ENCODE measurements at regions of chr2 and their contacts with region 1.

Region 1: GRCh38 chr2:171939743-171940071 is 17.4 kb downstream of the HAT1 start:
- DNase-seq: no peak
- H3K4me3 ChIP-seq: no peak overlapping the region
- H3K27ac ChIP-seq: no peak overlapping the region
- H3K4me1 ChIP-seq: no peaks in the 10 kb centered on the region
- H3K27me3 ChIP-seq: no peaks in the 10 kb centered on the region
- CTCF ChIP-seq: no peak
- EP300 ChIP-seq: no peak
- POLR2A ChIP-seq: no peak
- RAD21 ChIP-seq: no peak

Region 2: GRCh38 chr2:171922230-171923022 is 17.3 kb before region 1 on chr2 and contains the start of gene HAT1:
- CTCF ChIA-PET with region 1: interaction called, 13 read pairs
- POLR2A ChIA-PET with region 1: interaction called, 12 read pairs
- DNase-seq: peak; percentile 92 to 99
- H3K4me3 ChIP-seq: peak within 1 kb of the TSS; percentile 86 to 98 (median 92)
- H3K27ac ChIP-seq: peak within 1 kb of the TSS; percentile 96
- H3K4me1 ChIP-seq: no peaks in the 10 kb centered on the region; a peak in 3 of 7 replicates
- H3K27me3 ChIP-seq: no peaks in the 10 kb centered on the region
- CTCF ChIP-seq: peak in 1 of 3 experiments; percentile 2; a peak in 1 of 4 replicates
- EP300 ChIP-seq: no peak
- POLR2A ChIP-seq: peak; percentile 81 to 89
- RAD21 ChIP-seq: no peak
- total RNA-seq, gene HAT1: 68.4 and 74.2 TPM in 2 replicates

Measured in H1 (cell line).